Mucosa of descending colon (tissue), 3 donors: ENCODE measurements at regions of chrX and their contacts with region 1.

Region 1: DNA sequence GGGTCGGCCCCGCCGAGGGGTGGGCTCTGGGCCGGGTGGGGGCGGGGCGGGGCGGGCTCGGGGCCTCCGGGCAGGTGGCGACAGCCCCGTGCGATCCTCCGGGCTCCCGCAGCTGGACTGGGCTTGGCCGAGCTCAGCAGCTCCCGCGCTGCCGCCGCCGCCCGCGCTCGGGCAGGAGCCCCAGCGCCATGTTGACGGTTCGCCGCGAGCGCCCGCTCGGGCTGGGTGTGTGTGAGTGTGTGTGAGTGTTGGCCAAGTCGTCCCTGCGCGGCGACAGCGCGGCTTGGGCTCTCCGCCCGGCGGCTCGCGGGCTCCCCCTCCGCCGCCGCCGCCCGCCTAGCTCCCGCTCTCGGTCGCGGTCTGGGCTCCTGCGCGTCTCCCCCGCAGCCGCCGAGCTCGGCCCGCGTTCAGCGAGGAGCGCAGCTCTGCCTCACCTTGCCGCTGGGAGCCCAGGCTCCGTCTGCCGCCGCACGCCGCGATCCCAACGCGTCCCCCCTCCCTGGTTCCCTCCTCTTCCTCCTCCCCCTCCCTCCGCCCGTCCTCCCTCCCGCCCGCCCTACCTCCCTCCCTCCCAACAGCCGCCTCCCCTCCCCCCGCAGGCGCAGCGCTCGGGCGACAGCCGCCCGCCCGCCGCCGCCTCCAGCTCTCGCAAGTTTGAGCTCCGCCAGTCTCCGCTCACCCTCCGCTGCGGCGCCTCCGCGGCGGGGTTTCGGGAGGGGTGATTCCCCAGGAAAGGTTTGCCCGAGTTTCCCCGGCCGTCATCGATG is at the start of gene BCOR:
- DNase-seq: peak; percentile 80 to 87 (median 86)
- ATAC-seq: peak; percentile 73
- H3K4me3 ChIP-seq: peak within 1 kb of the TSS; percentile 42
- H3K4me1 ChIP-seq: peaks cover 13% of the 10 kb centered on the region
- CTCF ChIP-seq: no peak
- total RNA-seq, gene BCOR: 18.7 to 26.3 (median 23.6) TPM

Region 2: DNA sequence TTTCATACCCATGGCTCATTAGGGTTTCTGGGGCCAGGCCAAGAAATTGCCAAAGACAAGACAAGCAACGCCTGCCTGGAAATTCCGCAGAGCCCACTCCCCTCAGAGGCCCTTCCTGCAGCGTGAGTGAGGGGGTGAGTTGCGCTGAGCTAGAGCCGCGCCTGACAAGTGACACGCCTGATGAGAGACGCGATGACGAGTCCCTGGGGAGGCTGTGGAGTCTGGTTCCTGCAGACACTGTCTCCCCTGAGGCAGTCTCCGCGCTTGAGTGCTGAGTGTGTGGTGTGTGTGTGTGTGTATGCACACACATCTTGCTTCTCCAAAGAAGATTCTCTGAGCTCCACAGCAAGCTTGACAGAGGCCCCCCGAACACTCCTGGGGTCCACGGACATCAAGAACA is 269.7 kb before region 1 on chrX:
- intact Hi-C with region 1: no loop called
- DNase-seq: no peak
- ATAC-seq: peak; percentile 23
- H3K4me3 ChIP-seq: no peak overlapping the region
- H3K4me1 ChIP-seq: no peaks in the 10 kb centered on the region
- CTCF ChIP-seq: no peak

Region 3: GRCh38 chrX:39921838-39922237 is 175.8 kb before region 1 on chrX:
- intact Hi-C with region 1: no loop called
- DNase-seq: no peak
- ATAC-seq: no peak
- H3K4me3 ChIP-seq: no peak overlapping the region
- H3K4me1 ChIP-seq: no peaks in the 10 kb centered on the region
- CTCF ChIP-seq: no peak

Region 4: DNA sequence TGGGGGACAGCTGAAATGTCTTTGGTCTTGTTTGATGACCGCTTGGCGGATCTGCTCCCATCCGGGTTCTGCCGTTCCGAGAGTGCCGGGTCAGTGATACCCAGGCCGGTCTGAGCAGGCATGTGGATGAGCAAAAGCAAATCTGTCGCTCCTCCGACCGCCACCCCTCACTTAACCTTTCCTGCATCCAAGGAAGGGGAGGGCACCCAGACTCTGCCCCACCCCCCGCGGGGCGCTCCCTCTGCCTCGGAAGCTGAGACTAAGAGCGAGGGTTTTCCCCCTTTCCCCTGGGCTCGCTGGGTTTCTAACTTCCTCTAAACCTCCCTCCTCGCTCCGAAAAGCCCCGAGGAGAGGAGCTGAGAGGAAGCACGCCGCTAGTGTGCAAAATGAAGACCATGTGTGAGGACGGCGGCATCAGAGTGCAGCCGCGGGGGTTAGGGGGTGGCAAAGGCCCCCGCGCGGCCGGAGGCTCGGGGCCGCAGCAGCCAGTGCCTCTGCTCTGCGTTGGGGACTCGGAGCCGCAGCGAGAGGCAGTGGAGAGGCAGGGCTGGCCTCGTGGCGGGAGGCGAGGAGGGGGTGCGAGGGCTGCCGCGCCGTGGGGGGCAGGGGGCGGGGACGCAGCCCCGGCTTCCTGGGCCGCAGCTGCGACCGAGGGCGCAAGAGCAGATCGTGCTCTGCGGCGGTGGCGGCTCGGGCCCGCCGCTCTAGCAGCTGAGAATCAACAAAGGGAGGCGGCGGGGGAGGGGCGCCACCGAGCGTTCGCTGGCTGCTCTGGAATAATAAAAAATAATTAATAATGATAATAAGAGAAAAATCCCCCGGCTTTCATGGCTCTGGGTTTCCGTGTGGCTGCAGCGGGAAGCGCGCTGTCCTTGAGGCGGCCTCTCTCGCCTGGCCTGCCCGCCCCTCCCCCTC is 55.9 kb after region 1 on chrX:
- intact Hi-C with region 1: loop called in 1 of 2 experiments (anchors 10 kb)
- DNase-seq: peak; percentile 64 to 81 (median 72)
- ATAC-seq: peak; percentile 54
- H3K4me3 ChIP-seq: no peak overlapping the region
- H3K4me1 ChIP-seq: peaks cover 6% of the 10 kb centered on the region
- CTCF ChIP-seq: no peak